ENCODE measurements at regions of chr1 and their contacts with region 1.

Region 1: GRCh38 chr1:174815036-174815435 is 184.7 kb upstream of the CACYBP start:
- DNase-seq: peak; percentile 87
- H3K4me3 Mint-ChIP-seq: no peak overlapping the region
- H3K27ac Mint-ChIP-seq: peak overlapping the region; percentile 63
- H3K4me1 Mint-ChIP-seq: peaks cover 32% of the 10 kb centered on the region
- H3K27me3 Mint-ChIP-seq: no peaks in the 10 kb centered on the region
- CTCF ChIP-seq: no peak

Region 2: GRCh38 chr1:174800216-174800851 is 14.7 kb before region 1 on chr1:
- CTCF ChIA-PET with region 1: interaction called, 8 read pairs
- POLR2A ChIA-PET with region 1: interaction called, 20 read pairs
- intact Hi-C with region 1: loop called (anchors 1 kb)
- DNase-seq: no peak
- H3K4me3 Mint-ChIP-seq: no peak overlapping the region
- H3K27ac Mint-ChIP-seq: no peak overlapping the region
- H3K4me1 Mint-ChIP-seq: peaks cover 8% of the 10 kb centered on the region
- H3K27me3 Mint-ChIP-seq: no peaks in the 10 kb centered on the region
- CTCF ChIP-seq: no peak

Measured in MCF 10A (cell line).